CD8-positive, alpha-beta memory T cell (primary cell): ENCODE measurements at regions of chr1 and their contacts with region 1.

Region 1: DNA sequence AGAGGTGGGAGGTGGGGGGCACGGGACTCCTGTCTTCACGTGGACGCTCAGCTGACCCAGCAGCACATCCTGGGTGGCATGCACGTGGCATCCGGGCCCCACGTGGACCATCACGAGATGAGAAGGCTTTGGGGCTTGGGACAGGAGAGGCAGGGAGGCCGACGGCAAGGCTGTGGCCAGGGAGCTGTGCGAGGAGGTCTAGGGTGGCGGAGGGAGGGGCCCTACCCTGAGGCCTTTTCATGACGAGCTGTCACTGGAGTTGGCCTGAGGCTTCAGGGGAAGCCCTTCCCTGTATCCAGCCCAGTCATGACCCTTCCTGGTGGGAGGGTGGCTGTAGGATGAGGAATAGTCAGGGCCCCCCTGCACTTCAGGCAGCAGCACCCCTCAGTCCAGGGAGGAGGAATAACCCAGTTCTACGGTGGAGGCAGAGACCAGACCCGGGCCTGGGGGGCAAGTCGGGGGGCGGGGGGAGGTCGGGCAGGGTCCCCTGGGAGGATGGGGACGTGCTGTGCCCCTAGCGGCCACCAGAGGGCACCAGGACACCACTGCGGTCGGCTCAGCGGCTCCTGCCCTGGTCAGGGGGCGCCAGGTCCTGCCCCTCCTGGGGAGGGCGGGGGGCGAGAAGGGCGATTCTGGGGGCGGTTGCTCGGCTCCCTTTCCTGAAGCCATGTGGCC is 2.0 kb upstream of the PERM1 start:
- DNase-seq: peak; percentile 47 to 75 (median 53)
- H3K4me3 ChIP-seq: no peak overlapping the region
- H3K4me3 Mint-ChIP-seq: no peak overlapping the region
- H3K27ac ChIP-seq: no peak overlapping the region
- H3K27ac Mint-ChIP-seq: no peak overlapping the region
- H3K4me1 ChIP-seq: no peaks in the 10 kb centered on the region
- H3K4me1 Mint-ChIP-seq: no peaks in the 10 kb centered on the region
- H3K27me3 ChIP-seq: peaks cover 3% of the 10 kb centered on the region
- H3K27me3 Mint-ChIP-seq: peaks cover 22 to 43% of the 10 kb centered on the region in 2 donors

Region 2: GRCh38 chr1:995665-996633 is 12.0 kb after region 1 on chr1:
- CTCF ChIA-PET with region 1: interaction called, 17 read pairs
- POLR2A ChIA-PET with region 1: no interaction called
- DNase-seq: peak in 1 of 5 donors; percentile 45
- H3K4me3 ChIP-seq: no peak overlapping the region
- H3K4me3 Mint-ChIP-seq: peak overlapping the region in 2 of 7 donors; percentile 60 to 72
- H3K27ac ChIP-seq: no peak overlapping the region
- H3K27ac Mint-ChIP-seq: peak overlapping the region in 3 of 8 donors; percentile 11 to 74 (median 31)
- H3K4me1 ChIP-seq: peaks cover 11% of the 10 kb centered on the region
- H3K4me1 Mint-ChIP-seq: peaks cover 5 to 9% (median 6%) of the 10 kb centered on the region in 3 donors
- H3K27me3 ChIP-seq: peaks cover 7% of the 10 kb centered on the region
- H3K27me3 Mint-ChIP-seq: peaks cover 38 to 45% of the 10 kb centered on the region in 2 donors